ENCODE measurements at regions of chr5 and their contacts with region 1.

Region 1: GRCh38 chr5:115586601-115587048 is 15.7 kb downstream of the TICAM2 start:
- DNase-seq: no peak
- H3K4me3 ChIP-seq: no peak overlapping the region
- H3K27ac ChIP-seq: no peak overlapping the region
- H3K4me1 ChIP-seq: no peaks in the 10 kb centered on the region
- H3K27me3 ChIP-seq: no peaks in the 10 kb centered on the region
- CTCF ChIP-seq: peak; percentile 35 to 71 (median 51)
- POLR2A ChIP-seq: no peak

Region 2: GRCh38 chr5:114928644-114929462 is 657.8 kb before region 1 on chr5:
- intact Hi-C with region 1: no loop called
- DNase-seq: no peak
- H3K4me3 ChIP-seq: no peak overlapping the region
- H3K27ac ChIP-seq: no peak overlapping the region
- H3K4me1 ChIP-seq: no peaks in the 10 kb centered on the region
- H3K27me3 ChIP-seq: no peaks in the 10 kb centered on the region
- CTCF ChIP-seq: no peak
- POLR2A ChIP-seq: no peak

Region 3: GRCh38 chr5:115309751-115310370 is 276.8 kb before region 1 on chr5:
- intact Hi-C with region 1: loop called (anchors 2 kb)
- DNase-seq: no peak
- H3K4me3 ChIP-seq: no peak overlapping the region
- H3K27ac ChIP-seq: no peak overlapping the region
- H3K4me1 ChIP-seq: no peaks in the 10 kb centered on the region
- H3K27me3 ChIP-seq: no peaks in the 10 kb centered on the region
- CTCF ChIP-seq: peak; percentile 67 to 77 (median 70)
- POLR2A ChIP-seq: no peak

Measured in uterus (tissue), 4 donors.